ENCODE measurements at regions of chr2 and their contacts with region 1.

Region 1: DNA sequence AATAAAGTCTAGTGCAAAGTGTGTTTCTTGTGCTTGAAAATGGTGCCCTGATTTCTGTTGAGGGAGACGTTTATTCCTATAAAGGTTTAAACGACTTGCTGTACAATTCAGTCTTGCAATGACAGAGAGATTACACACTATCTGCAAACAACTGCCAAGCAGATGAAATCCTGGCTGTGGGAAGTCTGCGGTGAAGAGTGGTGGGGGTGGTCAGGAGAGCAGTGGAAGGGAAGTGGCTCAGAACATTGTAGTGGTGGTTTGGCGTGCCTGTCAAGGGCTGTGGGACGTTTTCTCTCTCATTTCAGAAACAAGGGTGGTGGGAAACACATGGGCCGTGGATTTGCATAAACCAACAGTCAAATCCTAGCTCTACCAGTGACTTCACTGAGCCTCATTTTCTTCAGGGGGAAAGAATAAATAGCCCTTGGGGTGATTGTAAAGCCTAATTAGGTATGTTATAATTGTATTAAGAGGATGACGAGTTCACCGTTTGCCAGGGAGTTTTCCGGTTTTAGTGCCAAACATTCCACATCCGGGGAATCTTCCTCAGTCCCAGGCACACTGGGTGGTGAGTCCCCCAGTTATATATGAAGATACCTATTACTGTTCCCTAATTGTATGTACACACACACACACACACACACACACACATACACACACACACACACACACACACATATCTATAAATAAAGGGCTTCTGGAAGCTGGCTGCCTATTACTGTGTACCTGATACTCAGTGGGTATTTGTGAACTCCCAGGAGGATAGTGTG is 115.0 kb downstream of the SPTBN1 start:
- DNase-seq: peak; percentile 93
- H3K4me3 Mint-ChIP-seq: peak overlapping the region; percentile 48
- H3K27ac Mint-ChIP-seq: peak overlapping the region; percentile 91
- H3K4me1 Mint-ChIP-seq: peaks cover 87% of the 10 kb centered on the region
- H3K27me3 Mint-ChIP-seq: no peaks in the 10 kb centered on the region

Region 2: GRCh38 chr2:53786705-53787612 is 784.2 kb before region 1 on chr2 and contains the starts of genes ASB3 and ERLEC1:
- CTCF ChIA-PET with region 1: no interaction called
- intact Hi-C with region 1: loop called (anchors 5 kb)
- DNase-seq: peak; percentile 90
- H3K4me3 Mint-ChIP-seq: peak within 1 kb of the TSS; percentile 95
- H3K27ac Mint-ChIP-seq: peak within 1 kb of the TSS; percentile 89
- H3K4me1 Mint-ChIP-seq: peaks cover 50% of the 10 kb centered on the region
- H3K27me3 Mint-ChIP-seq: no peaks in the 10 kb centered on the region
- total RNA-seq, gene ASB3: 17.2 to 19.1 TPM
- total RNA-seq, gene ERLEC1: 16.7 to 18.5 TPM

Region 3: GRCh38 chr2:54115284-54116137 is 455.6 kb before region 1 on chr2 and contains the start of gene ACYP2:
- CTCF ChIA-PET with region 1: no interaction called
- intact Hi-C with region 1: loop called (anchors 5 kb)
- DNase-seq: peak; percentile 95
- H3K4me3 Mint-ChIP-seq: peak within 1 kb of the TSS; percentile 97
- H3K27ac Mint-ChIP-seq: peak within 1 kb of the TSS; percentile 100
- H3K4me1 Mint-ChIP-seq: peaks cover 11% of the 10 kb centered on the region
- H3K27me3 Mint-ChIP-seq: no peaks in the 10 kb centered on the region
- total RNA-seq, gene ACYP2: 6.8 to 7.3 TPM

Region 4: GRCh38 chr2:54558188-54559005 is 12.7 kb before region 1 on chr2:
- CTCF ChIA-PET with region 1: interaction called, 68 read pairs
- intact Hi-C with region 1: loop called (anchors 1 kb)
- DNase-seq: peak; percentile 83
- H3K4me3 Mint-ChIP-seq: peak overlapping the region; percentile 87
- H3K27ac Mint-ChIP-seq: peak overlapping the region; percentile 99
- H3K4me1 Mint-ChIP-seq: peaks cover 43% of the 10 kb centered on the region
- H3K27me3 Mint-ChIP-seq: no peaks in the 10 kb centered on the region

Region 5: GRCh38 chr2:54597153-54597848 is 26.2 kb after region 1 on chr2:
- CTCF ChIA-PET with region 1: interaction called, 6 read pairs
- intact Hi-C with region 1: loop called (anchors 1 kb)
- DNase-seq: peak; percentile 62
- H3K4me3 Mint-ChIP-seq: peak overlapping the region; percentile 75
- H3K27ac Mint-ChIP-seq: peak overlapping the region; percentile 96
- H3K4me1 Mint-ChIP-seq: peaks cover 92% of the 10 kb centered on the region
- H3K27me3 Mint-ChIP-seq: no peaks in the 10 kb centered on the region

Region 6: DNA sequence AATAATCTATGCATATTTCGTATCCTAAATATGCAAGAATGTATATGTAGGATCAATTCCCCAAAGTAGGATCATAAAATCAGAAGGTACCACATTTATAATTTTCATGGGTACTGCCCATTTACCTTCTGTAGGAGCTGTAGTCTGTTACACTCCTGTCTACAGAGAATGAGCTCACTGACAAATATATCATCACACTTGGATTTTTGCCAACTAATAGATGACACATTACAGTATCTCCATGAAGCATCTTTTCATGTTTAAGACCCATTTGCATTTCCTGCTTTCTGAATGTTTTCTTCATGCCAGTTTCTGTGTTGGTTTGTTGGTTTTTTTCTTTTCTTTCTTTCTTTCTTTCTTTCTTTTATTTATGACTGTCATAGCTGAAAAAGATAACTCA is 81.4 kb after region 1 on chr2:
- CTCF ChIA-PET with region 1: no interaction called
- intact Hi-C with region 1: loop called (anchors 2 kb)
- DNase-seq: no peak
- H3K4me3 Mint-ChIP-seq: no peak overlapping the region
- H3K27ac Mint-ChIP-seq: no peak overlapping the region
- H3K4me1 Mint-ChIP-seq: peaks cover 11% of the 10 kb centered on the region
- H3K27me3 Mint-ChIP-seq: no peaks in the 10 kb centered on the region

Region 7: DNA sequence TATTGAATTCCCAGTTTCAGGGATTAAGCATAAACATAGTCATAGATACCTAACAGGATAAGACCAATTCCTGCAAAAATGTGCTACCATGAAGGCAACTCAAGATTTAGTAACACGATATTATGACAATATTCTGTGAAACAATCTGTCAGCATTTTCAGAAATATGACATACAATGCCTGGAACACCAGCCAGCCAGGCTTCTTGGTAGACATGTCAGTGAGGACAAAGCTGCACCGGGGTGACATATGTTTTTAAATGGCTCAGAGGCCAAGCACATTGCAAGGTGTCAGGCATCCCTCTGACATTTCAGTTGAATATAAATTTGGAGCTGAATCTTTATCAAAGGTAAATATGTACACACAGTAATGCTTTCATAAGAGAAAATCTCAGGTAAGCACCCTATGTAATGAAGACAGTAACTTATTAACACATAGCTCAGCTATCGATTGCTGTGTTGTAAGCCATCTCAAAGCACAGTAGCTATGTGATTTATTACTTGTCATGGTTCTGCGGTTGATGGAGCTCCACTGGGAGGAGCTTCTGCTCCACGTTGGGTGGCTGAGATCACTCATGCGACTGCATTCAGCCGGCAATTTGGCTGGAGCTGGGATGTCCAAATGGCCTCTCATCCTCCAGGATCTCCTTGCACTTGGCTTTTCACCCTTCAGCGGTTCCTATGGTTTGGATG is 120.5 kb after region 1 on chr2:
- CTCF ChIA-PET with region 1: no interaction called
- intact Hi-C with region 1: no loop called
- DNase-seq: no peak
- H3K4me3 Mint-ChIP-seq: no peak overlapping the region
- H3K27ac Mint-ChIP-seq: no peak overlapping the region
- H3K4me1 Mint-ChIP-seq: peaks cover 5% of the 10 kb centered on the region
- H3K27me3 Mint-ChIP-seq: peaks cover 8% of the 10 kb centered on the region

Region 8: DNA sequence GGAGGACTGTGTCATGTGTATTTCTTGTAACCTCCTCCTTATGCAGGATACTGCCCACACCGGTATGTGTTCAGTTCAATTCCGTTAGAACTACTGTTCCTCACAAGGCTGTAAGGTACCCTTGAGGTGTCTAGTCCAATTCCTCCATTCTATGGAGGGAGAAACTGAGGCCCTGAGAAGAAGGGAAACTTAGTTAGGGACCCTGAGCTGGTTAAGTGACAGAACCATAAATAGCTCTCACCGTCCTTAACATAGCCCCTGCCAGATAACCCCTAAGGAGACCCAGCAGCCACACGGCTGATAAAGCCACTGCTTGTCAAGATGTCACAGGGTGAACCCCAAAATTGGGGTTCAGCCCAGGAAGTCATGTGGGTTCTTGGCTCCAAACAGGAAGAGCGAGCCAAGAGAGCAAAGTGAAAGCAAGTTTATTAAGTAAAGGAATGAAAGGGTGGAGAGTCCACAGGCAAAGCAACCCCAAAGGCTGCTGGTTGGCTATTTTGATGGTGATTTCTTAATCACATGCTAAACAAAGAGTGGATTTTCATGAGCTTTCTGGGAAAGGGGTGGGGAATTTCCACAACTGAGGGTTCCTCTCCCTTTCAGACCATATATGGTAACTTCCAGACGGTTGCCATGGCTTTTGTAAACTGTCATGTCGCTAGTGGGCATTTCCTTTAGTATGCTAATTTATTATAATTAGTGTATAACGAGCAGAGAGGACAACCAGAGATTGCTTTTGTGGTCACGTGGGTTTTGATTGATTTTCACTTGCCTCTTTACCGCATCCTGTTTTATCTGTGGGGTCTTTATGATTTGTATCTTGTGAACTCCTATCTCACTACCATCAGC is 562.6 kb after region 1 on chr2:
- CTCF ChIA-PET with region 1: no interaction called
- intact Hi-C with region 1: loop called (anchors 5 kb)
- DNase-seq: peak; percentile 80
- H3K4me3 Mint-ChIP-seq: peak overlapping the region; percentile 75
- H3K27ac Mint-ChIP-seq: peak overlapping the region; percentile 95
- H3K4me1 Mint-ChIP-seq: peaks cover 25% of the 10 kb centered on the region
- H3K27me3 Mint-ChIP-seq: no peaks in the 10 kb centered on the region